Body of pancreas (tissue), 4 donors: ENCODE measurements at regions of chr11 and their contacts with region 1.

Region 1: GRCh38 chr11:44036811-44037657 is 10.7 kb upstream of the ACCSL start:
- DNase-seq: peak; percentile 65 to 83 (median 80)
- ATAC-seq: peak; percentile 85
- H3K4me3 ChIP-seq: no peak overlapping the region
- H3K27ac ChIP-seq: no peak overlapping the region
- H3K4me1 ChIP-seq: no peaks in the 10 kb centered on the region
- H3K27me3 ChIP-seq: no peaks in the 10 kb centered on the region
- CTCF ChIP-seq: peak; percentile 50 to 81 (median 63)
- POLR2A ChIP-seq: no peak

Region 2: GRCh38 chr11:43880640-43881159 is 156.3 kb before region 1 on chr11 and contains the start of gene ALKBH3:
- intact Hi-C with region 1: loop called (anchors 5 kb)
- DNase-seq: peak; percentile 93 to 97 (median 94)
- ATAC-seq: peak; percentile 100
- H3K4me3 ChIP-seq: peak within 1 kb of the TSS; percentile 95
- H3K27ac ChIP-seq: peak within 1 kb of the TSS in 3 of 4 donors; percentile 33 to 43 (median 33)
- H3K4me1 ChIP-seq: peaks cover 16% of the 10 kb centered on the region
- H3K27me3 ChIP-seq: no peaks in the 10 kb centered on the region
- CTCF ChIP-seq: peak in 4 of 7 experiments; percentile 15 to 33 (median 20)
- POLR2A ChIP-seq: peak in 2 of 3 donors; percentile 52 to 54
- total RNA-seq, gene ALKBH3: 29.3 to 30.0 TPM

Region 3: GRCh38 chr11:43933608-43934551 is 103.2 kb before region 1 on chr11:
- intact Hi-C with region 1: no loop called
- DNase-seq: no peak
- ATAC-seq: peak; percentile 38
- H3K4me3 ChIP-seq: no peak overlapping the region
- H3K27ac ChIP-seq: no peak overlapping the region
- H3K4me1 ChIP-seq: no peaks in the 10 kb centered on the region
- H3K27me3 ChIP-seq: no peaks in the 10 kb centered on the region
- CTCF ChIP-seq: no peak
- POLR2A ChIP-seq: no peak